ENCODE measurements at regions of chr1 and their contacts with region 1.

Region 1: GRCh38 chr1:238061967-238062613 is 171.4 kb upstream of the ZP4 start:
- DNase-seq: no peak
- H3K4me3 ChIP-seq: no peak overlapping the region
- H3K27ac ChIP-seq: no peak overlapping the region
- H3K4me1 ChIP-seq: no peaks in the 10 kb centered on the region
- H3K27me3 ChIP-seq: no peaks in the 10 kb centered on the region
- CTCF ChIP-seq: no peak
- POLR2A ChIP-seq: no peak

Region 2: GRCh38 chr1:238027366-238027765 is 34.7 kb before region 1 on chr1:
- intact Hi-C with region 1: loop called (anchors 1 kb)
- DNase-seq: no peak
- H3K4me3 ChIP-seq: no peak overlapping the region
- H3K27ac ChIP-seq: no peak overlapping the region
- H3K4me1 ChIP-seq: no peaks in the 10 kb centered on the region
- H3K27me3 ChIP-seq: no peaks in the 10 kb centered on the region
- CTCF ChIP-seq: no peak
- POLR2A ChIP-seq: no peak